AG04450 (cell line): ENCODE measurements at regions of chr17 and their contacts with region 1.

Region 1: DNA sequence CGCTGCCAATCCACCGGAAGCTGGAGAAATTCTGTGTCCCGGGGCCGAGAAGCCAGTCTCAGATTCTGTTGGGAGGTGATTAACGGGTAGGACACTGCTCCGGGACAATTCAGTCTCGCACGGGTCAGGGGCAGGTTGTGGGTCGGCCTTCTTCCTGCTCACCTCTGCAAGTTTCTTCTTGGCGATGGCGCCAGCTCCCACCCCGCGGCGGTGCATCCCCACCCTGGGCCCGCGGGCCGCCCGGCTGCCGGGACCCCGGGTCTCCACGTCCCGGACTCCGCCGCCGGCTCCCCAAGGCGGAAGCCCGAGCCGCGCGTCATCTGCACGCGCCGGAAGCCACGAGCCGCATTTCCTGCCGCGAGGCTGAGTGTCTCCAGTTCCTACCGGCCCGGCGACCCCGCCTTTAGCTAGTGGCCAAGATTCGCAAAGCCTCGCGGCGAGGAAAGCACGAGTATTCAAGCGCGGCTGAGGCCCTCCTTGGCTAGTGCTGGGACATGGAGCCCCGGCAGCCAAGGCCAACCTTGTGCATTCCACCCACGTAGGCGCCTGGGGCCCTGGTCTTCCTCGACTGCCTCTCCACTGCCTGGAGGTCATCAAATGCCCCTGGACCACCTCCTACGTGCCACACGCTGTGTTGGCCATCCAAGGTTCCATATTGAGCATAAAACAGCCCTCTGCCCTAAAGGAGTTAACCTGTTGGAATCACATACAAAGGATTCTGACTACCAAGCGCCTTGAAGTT is at the start of gene SNF8:
- DNase-seq: peak; percentile 69
- H3K4me3 ChIP-seq: peak within 1 kb of the TSS; percentile 95
- H3K27ac ChIP-seq: peak within 1 kb of the TSS; percentile 91
- H3K27me3 ChIP-seq: no peaks in the 10 kb centered on the region
- CTCF ChIP-seq: no peak
- polyA plus RNA-seq, gene SNF8: 116 and 119 TPM in 2 replicates

Region 2: GRCh38 chr17:48997083-48997826 is 52.6 kb after region 1 on chr17 and contains the start of gene IGF2BP1:
- CTCF ChIA-PET with region 1: interaction called, 3 read pairs
- POLR2A ChIA-PET with region 1: interaction called, 25 read pairs
- DNase-seq: no peak
- H3K4me3 ChIP-seq: peak within 1 kb of the TSS; percentile 92
- H3K27ac ChIP-seq: peak within 1 kb of the TSS; percentile 89
- H3K27me3 ChIP-seq: peaks cover 28% of the 10 kb centered on the region
- CTCF ChIP-seq: no peak
- polyA plus RNA-seq, gene IGF2BP1: 9.9 and 11.7 TPM in 2 replicates

Region 3: DNA sequence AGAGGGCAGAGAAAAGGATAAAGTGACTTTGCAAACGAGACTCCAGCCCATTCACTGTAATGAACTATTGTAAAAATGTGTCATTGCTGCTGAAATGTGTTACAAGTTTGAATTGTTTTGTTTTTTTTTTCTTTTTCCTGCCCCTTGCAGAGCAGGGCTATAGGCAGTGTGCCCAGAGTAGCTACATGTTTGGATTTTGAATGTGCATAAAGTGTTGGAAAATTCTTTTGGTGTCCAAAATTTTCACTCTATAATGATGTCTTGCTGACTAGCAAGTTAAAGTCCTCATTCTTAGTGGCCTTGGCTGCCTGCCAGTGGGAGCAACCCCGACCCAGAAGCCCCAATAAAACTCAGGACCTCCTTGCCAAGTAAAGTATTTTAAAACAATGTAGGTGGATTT is 119.0 kb after region 1 on chr17:
- CTCF ChIA-PET with region 1: no interaction called
- POLR2A ChIA-PET with region 1: no interaction called
- DNase-seq: no peak
- H3K4me3 ChIP-seq: no peak overlapping the region
- H3K27ac ChIP-seq: no peak overlapping the region
- H3K27me3 ChIP-seq: no peaks in the 10 kb centered on the region
- CTCF ChIP-seq: no peak